ENCODE measurements at regions of chr2 and their contacts with region 1.

Region 1: DNA sequence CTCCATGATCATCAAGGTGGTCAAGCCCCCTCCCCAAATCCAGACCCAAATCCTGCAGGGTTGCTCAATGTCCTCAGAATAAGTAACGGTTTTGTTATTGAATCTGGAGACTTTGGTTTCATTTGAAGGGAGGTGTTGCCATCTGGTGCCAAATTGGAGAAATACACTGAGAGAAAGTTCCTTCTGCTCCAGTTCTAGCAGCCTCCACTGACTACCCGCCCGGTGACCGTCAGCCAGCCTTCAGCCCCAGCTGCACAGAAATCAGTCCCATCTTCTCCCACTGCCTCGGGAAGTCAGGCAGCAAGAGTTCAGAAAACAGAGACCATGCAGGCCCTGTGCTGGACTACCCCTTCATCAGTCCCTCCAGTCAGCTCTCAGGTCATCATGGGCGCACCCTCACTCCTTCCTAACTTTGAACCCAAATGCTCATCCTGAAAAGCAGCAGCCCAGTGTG is 38.7 kb downstream of the PKDCC start:
- DNase-seq: peak; percentile 61 to 82 (median 71)
- H3K4me3 ChIP-seq: no peak overlapping the region
- H3K27ac ChIP-seq: no peak overlapping the region
- H3K4me1 ChIP-seq: peaks cover 0 to 2% (median 0%) of the 10 kb centered on the region in 4 experiments
- H3K27me3 ChIP-seq: no peaks in the 10 kb centered on the region

Region 2: GRCh38 chr2:41647468-41648050 is 439.0 kb before region 1 on chr2:
- CTCF ChIA-PET with region 1: no interaction called
- POLR2A ChIA-PET with region 1: no interaction called
- DNase-seq: no peak
- H3K4me3 ChIP-seq: no peak overlapping the region
- H3K27ac ChIP-seq: no peak overlapping the region
- H3K4me1 ChIP-seq: no peaks in the 10 kb centered on the region
- H3K27me3 ChIP-seq: no peaks in the 10 kb centered on the region

Region 3: GRCh38 chr2:41853427-41854216 is 232.9 kb before region 1 on chr2:
- CTCF ChIA-PET with region 1: interaction called, 114 read pairs
- POLR2A ChIA-PET with region 1: no interaction called
- DNase-seq: peak; percentile 9 to 21 (median 14)
- H3K4me3 ChIP-seq: no peak overlapping the region
- H3K27ac ChIP-seq: no peak overlapping the region
- H3K4me1 ChIP-seq: no peaks in the 10 kb centered on the region
- H3K27me3 ChIP-seq: peaks cover 2 to 9% (median 3%) of the 10 kb centered on the region in 5 experiments

Region 4: GRCh38 chr2:41869542-41870264 is 216.8 kb before region 1 on chr2:
- CTCF ChIA-PET with region 1: interaction called, 505 read pairs
- POLR2A ChIA-PET with region 1: interaction called, 4 read pairs
- DNase-seq: peak; percentile 47 to 76 (median 66)
- H3K4me3 ChIP-seq: no peak overlapping the region
- H3K27ac ChIP-seq: no peak overlapping the region
- H3K4me1 ChIP-seq: no peaks in the 10 kb centered on the region
- H3K27me3 ChIP-seq: peaks cover 0 to 6% (median 0%) of the 10 kb centered on the region in 5 experiments

Region 5: GRCh38 chr2:42072349-42073118 is 14.0 kb before region 1 on chr2:
- CTCF ChIA-PET with region 1: interaction called, 24 read pairs
- POLR2A ChIA-PET with region 1: no interaction called
- DNase-seq: no peak
- H3K4me3 ChIP-seq: no peak overlapping the region
- H3K27ac ChIP-seq: no peak overlapping the region
- H3K4me1 ChIP-seq: peaks cover 0 to 18% (median 16%) of the 10 kb centered on the region in 4 experiments
- H3K27me3 ChIP-seq: no peaks in the 10 kb centered on the region

Region 6: DNA sequence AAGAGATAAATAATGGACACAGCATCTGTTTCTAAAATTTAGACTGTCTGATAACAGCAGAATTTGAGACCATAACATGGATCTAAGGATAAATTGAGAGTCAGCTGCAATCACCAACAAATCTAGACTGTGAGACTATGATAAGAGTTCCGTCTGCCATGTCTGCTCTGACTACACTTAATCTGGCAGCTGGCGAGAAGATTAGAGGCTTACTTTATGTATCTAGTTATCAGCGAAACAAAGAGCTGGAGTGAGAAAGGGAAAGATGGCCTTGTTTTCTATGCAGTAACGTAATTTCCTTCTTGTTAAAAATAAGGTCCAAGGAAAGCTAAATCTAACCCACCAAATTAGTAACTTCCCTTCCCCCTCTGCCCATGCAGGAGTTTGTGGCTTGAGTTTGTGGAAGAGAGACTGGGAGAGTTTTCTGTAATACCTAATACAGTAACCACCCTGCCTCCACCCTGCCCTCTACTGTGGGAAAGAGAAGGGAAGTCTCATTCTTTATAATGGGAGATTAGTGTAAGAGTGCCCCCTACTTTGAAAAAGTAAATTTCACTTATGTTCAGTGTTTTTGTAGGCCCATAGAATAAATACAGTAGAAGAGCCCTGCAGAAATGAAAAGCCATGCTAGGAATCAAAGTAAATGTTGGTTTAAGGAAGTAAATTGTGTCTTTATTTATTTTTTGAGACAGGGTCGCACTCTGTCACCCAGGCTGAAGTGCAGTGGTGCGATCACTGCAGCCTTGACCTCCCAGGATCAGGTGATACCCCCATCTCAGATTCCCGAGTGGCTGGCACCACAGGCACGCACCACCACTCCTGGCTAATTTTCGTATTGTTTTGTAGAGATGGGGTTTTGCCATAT is 110.1 kb after region 1 on chr2:
- CTCF ChIA-PET with region 1: interaction called, 15 read pairs
- POLR2A ChIA-PET with region 1: no interaction called
- DNase-seq: peak; percentile 67 to 73 (median 72)
- H3K4me3 ChIP-seq: no peak overlapping the region
- H3K27ac ChIP-seq: peak overlapping the region in 1 of 2 experiments; percentile 9
- H3K4me1 ChIP-seq: peaks cover 0 to 11% (median 8%) of the 10 kb centered on the region in 4 experiments
- H3K27me3 ChIP-seq: no peaks in the 10 kb centered on the region

Region 7: DNA sequence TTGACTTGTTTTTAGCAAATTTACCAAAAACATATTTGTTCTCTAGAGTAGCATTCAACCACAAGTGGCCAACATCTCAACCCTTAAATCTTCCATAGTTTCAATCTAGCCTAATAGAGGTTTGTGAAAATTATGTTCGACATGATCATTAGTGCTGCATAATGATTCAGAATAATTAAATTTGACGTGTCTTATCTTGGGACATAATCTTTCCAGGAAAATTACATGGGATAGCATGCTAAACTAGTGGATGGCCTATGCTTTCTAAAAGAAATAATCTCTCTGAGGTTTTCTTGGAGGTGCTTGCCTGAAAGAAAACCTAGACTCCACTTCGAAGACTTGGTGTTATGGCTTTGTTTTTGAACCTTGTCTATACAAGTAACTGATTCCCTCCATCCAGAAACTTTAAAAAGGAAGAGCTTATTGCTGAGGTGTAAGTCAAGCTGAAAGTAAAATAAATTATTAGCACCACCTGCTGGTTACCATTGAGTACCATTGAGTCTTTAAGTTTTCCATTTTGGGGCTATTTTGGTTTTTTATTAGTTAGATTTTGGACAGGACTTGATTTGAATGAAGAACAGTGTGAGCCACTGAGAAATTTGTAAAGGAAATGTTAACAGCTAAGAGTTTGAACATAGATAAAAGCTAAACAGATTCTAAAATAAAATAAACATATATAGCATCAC is 241.8 kb after region 1 on chr2:
- CTCF ChIA-PET with region 1: interaction called, 18 read pairs
- POLR2A ChIA-PET with region 1: no interaction called
- DNase-seq: peak; percentile 25 to 67 (median 61)
- H3K4me3 ChIP-seq: no peak overlapping the region
- H3K27ac ChIP-seq: no peak overlapping the region
- H3K4me1 ChIP-seq: no peaks in the 10 kb centered on the region
- H3K27me3 ChIP-seq: no peaks in the 10 kb centered on the region

Measured in common myeloid progenitor, CD34-positive (primary cell).